A549 (cell line): ENCODE measurements at regions of chr11 and their contacts with region 1.

Region 1: DNA sequence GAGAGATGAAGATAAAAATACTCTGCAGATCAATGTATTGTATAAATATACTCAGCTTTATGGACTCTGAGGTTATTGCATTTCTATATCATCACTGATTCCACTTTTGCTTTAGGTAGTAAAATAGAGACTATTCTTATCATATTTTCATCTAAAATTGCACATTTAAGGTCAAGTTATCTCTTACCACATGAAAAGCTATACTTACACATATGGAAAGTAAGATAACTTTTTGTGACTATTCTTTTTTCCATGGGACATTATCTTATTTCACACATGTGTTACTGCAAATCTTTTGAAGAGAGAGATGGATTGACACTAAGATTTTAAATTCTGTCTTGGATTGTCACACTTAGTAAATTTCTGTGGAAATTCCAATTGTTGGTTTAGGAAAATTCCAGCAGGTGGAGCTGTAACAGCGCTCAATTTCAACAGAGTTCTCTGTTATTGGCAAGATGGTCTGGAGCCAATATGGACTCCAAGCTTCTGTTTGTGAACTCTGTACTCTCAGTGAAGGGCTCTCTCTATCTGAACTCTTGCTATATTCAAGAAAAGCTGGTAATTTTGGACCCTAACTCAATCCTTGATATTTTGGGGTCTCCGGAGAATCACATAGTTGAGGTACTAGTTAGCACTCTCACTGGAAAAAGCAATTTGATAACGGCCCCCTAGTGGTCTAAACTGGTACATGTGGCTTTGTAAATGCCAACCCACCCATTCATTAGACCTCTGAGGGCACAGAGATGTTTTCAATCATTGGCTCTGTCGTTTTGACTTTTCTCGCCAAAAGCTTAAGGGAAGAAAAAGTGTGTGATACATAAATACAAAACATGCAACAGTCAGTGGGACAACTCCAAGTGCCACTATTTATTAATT is 429.7 kb downstream of the ETS1 start:
- DNase-seq: peak; percentile 20 to 74
- ATAC-seq: peak; percentile 81 to 89
- H3K4me3 ChIP-seq: peak overlapping the region; percentile 30; the same call in 1 of the 3 replicates
- H3K27ac ChIP-seq: peak overlapping the region; percentile 64 to 79
- H3K4me1 ChIP-seq: no peaks in the 10 kb centered on the region
- CTCF ChIP-seq: peak; percentile 96
- EP300 ChIP-seq: no peak
- POLR2A ChIP-seq: no peak
- RAD21 ChIP-seq: peak; percentile 73 to 80

Region 2: GRCh38 chr11:128130052-128130451 is 27.6 kb before region 1 on chr11:
- CTCF ChIA-PET with region 1: interaction called, 16 read pairs
- POLR2A ChIA-PET with region 1: no interaction called
- DNase-seq: no peak
- ATAC-seq: no peak
- H3K4me3 ChIP-seq: no peak overlapping the region
- H3K27ac ChIP-seq: no peak overlapping the region
- H3K4me1 ChIP-seq: no peaks in the 10 kb centered on the region
- CTCF ChIP-seq: no peak
- EP300 ChIP-seq: no peak
- POLR2A ChIP-seq: no peak
- RAD21 ChIP-seq: no peak

Region 3: DNA sequence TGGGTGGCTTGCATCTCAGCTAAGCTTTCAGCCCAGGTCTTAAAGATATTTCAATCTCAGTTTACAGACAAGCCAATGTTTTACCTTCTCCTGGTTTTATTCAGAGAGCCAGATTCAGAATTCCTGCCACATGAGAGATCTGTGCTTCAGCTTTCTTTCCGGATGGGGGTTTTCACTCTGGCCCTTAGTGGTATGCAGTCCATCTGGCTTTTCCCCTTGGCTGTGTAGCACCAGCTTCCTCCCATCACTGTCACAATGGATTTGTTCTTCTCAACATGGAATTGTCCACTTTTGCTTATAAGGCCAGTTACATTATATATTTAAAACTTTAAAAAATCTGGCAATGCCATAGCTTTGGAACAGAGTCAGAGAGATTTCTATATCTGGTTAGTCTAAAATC is 125.8 kb after region 1 on chr11:
- CTCF ChIA-PET with region 1: interaction called, 10 read pairs
- POLR2A ChIA-PET with region 1: no interaction called
- DNase-seq: no peak
- ATAC-seq: no peak
- H3K4me3 ChIP-seq: no peak overlapping the region
- H3K27ac ChIP-seq: no peak overlapping the region
- H3K4me1 ChIP-seq: no peaks in the 10 kb centered on the region
- CTCF ChIP-seq: no peak
- EP300 ChIP-seq: no peak
- POLR2A ChIP-seq: no peak
- RAD21 ChIP-seq: no peak

Region 4: DNA sequence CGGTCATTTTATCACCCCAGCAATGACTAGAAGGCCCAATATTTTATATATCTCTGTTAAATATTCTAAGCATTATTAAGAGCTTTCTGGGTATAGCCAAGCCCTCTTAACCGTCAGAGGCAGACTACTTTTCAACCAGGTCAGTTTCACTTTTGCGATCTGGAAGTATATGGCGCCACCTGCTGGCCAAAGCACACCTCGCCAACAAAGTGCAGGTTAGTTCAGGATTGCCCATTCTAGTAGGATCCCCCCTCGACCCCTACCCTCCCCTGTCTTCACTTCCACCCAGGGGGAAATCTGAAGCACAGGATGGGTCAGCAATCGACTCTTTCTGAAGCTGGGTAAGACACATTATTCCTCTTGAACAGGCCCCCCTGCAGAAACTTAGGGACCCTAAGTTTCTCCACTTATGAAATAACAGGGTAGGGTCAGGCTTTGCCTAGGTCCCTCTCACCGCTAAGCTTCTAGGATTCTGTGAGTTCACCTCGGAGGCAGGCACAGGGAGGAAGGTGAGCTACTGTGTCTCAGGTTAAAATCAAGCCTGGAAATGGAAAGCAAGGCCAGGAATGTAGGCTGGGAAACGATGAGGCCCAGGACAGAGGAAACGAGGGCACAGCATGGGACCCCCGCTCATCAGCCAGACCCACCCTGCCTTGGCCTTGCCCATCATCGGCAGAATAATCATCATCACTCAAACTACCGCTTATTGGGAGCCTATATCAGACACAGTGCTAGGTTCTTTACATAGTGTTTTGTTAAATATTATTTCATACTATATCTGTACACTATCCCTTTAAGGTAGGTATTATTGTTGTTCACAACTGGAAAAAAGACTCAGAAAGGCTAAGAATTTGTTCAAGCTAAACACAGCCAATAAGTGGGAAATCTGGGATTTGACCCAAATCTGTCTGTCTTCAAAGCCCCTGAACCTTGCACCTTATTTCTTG is 673.8 kb after region 1 on chr11:
- CTCF ChIA-PET with region 1: interaction called, 97 read pairs
- POLR2A ChIA-PET with region 1: no interaction called
- DNase-seq: peak; percentile 25 to 67
- ATAC-seq: peak; percentile 75 to 97; a peak in 4 of 6 replicates
- H3K4me3 ChIP-seq: no peak overlapping the region
- H3K27ac ChIP-seq: no peak overlapping the region
- H3K4me1 ChIP-seq: 0 out of 3 replicates have a peak, but pooled peaks cover 4% of the 10 kb centered on the region
- CTCF ChIP-seq: peak; percentile 77
- EP300 ChIP-seq: no peak
- POLR2A ChIP-seq: no peak
- RAD21 ChIP-seq: peak; percentile 76 to 82

Region 5: GRCh38 chr11:128859563-128860441 is 702.1 kb after region 1 on chr11:
- CTCF ChIA-PET with region 1: interaction called, 17 read pairs
- POLR2A ChIA-PET with region 1: no interaction called
- DNase-seq: peak; percentile 24 to 66
- ATAC-seq: peak; percentile 75 to 94
- H3K4me3 ChIP-seq: no peak overlapping the region
- H3K27ac ChIP-seq: no peak overlapping the region
- H3K4me1 ChIP-seq: no peaks in the 10 kb centered on the region
- CTCF ChIP-seq: peak; percentile 63
- EP300 ChIP-seq: no peak
- POLR2A ChIP-seq: no peak
- RAD21 ChIP-seq: peak in 1 of 2 experiments; percentile 34; a peak in 2 of 5 replicates